Left ventricle myocardium inferior (tissue), 1 donor: ENCODE measurements at regions of chr1 and their contacts with region 1.

Region 1: GRCh38 chr1:54406339-54407153 is at the start of gene SSBP3:
- DNase-seq: peak; percentile 94
- H3K4me3 ChIP-seq: peak within 1 kb of the TSS; percentile 95
- H3K27ac ChIP-seq: peak within 1 kb of the TSS; percentile 93
- H3K4me1 ChIP-seq: peaks cover 69% of the 10 kb centered on the region
- H3K27me3 ChIP-seq: no peaks in the 10 kb centered on the region
- CTCF ChIP-seq: peak; percentile 38
- total RNA-seq, gene SSBP3: 57.7 TPM

Region 2: DNA sequence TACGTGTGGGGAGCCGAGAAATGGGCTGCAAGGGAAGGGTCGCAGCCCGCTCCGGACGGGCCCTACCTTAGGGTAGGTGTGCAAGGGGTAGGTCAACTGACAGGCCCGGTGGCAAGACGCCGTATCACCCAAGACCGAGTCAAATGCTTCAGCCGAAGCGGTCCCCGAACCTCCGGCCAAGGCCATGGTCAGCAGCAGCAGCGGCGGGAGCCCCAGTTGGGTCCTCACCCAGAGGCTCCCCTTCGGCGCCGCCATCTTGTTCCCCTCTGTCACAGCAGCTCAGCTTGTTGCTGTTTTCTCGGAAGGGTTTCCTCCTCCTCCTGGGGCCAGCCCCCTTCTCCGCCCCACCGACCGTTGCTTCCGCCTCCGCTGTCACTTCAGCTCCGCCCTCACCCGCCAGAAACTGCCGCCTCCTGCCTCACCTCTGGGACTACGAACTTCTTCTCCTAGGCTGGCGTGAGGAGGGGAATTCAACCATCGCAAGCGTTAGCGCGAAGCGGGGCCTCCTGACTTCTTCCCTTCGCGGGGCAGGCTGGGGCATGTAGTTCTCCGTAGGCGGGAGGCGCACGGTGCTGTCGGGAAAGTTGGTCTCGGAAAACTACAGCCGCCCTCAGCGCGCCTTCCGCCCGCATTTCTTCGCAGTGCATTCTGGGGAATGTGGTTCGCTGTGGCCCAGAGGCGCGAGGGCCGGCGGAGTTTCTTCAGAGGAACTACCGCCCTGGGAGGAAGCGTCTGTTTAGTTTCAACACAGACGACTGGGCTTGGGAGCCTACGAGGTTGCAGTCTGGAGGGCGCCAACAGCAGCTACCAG is 353.4 kb before region 1 on chr1 and contains the starts of genes TCEANC2 and TMEM59:
- intact Hi-C with region 1: no loop called
- DNase-seq: peak; percentile 97
- H3K4me3 ChIP-seq: peak within 1 kb of the TSS; percentile 98
- H3K27ac ChIP-seq: peak within 1 kb of the TSS; percentile 97
- H3K4me1 ChIP-seq: peaks cover 63% of the 10 kb centered on the region
- H3K27me3 ChIP-seq: no peaks in the 10 kb centered on the region
- CTCF ChIP-seq: no peak
- total RNA-seq, gene TCEANC2: 5.7 TPM
- total RNA-seq, gene TMEM59: 337 TPM

Region 3: GRCh38 chr1:54309631-54310366 is 96.7 kb before region 1 on chr1:
- intact Hi-C with region 1: loop called (anchors 10 kb)
- DNase-seq: no peak
- H3K4me3 ChIP-seq: no peak overlapping the region
- H3K27ac ChIP-seq: no peak overlapping the region
- H3K4me1 ChIP-seq: peaks cover 99% of the 10 kb centered on the region
- H3K27me3 ChIP-seq: no peaks in the 10 kb centered on the region
- CTCF ChIP-seq: no peak

Region 4: GRCh38 chr1:54487571-54488050 is 81.1 kb after region 1 on chr1:
- intact Hi-C with region 1: loop called (anchors 2 kb)
- DNase-seq: peak; percentile 43
- H3K4me3 ChIP-seq: peak overlapping the region; percentile 79
- H3K27ac ChIP-seq: peak overlapping the region; percentile 95
- H3K4me1 ChIP-seq: peaks cover 42% of the 10 kb centered on the region
- H3K27me3 ChIP-seq: no peaks in the 10 kb centered on the region
- CTCF ChIP-seq: no peak